Activated CD4-positive, alpha-beta T cell treated with anti-CD3 and anti-CD28 coated beads for 36 hours (primary cell): ENCODE measurements at regions of chr1 and their contacts with region 1.

Region 1: DNA sequence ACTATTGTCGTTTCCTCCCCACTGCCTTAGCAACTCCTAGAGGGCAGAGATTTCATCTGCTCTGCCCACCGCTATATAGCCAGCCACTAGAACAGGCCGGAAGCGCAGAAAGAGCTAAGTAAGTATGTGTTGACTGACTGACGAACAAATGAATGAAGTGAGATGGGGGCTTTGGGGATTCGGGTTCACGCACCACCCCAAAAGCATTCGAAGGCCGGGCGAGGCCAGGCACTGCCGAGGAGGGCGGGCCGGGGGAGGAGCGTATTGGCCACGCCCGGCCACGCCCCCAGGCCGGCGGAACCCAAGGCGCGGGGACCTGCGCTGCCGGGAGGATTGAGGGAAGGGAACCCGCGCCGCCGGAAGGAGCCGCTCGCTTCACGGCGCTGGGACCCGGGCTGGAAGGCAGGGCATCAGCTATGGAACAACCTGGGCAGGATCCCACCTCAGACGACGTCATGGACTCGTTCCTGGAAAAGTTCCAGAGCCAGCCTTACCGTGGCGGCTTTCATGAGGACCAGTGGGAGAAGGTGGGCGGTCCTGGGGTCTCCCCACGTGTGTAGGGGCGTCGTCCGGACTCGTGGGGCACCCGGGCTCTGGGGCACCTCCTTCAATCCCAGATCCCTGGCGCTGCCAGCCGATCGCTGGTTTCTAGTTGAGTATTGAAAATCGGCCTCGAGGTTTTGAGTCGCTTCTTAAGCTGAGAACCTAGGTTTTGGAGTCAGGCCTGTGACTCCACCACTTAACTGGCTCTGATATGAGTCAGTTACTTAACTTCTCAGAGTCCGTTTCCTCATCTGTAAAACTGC is at the start of gene TTC4:
- DNase-seq: peak; percentile 91
- ATAC-seq: peak; percentile 92
- H3K4me3 Mint-ChIP-seq: peak within 1 kb of the TSS; percentile 85
- H3K27ac Mint-ChIP-seq: peak within 1 kb of the TSS; percentile 92
- H3K4me1 Mint-ChIP-seq: peaks cover 29% of the 10 kb centered on the region
- H3K27me3 Mint-ChIP-seq: no peaks in the 10 kb centered on the region
- total RNA-seq, gene TTC4: 34.4 to 36.1 TPM

Region 2: DNA sequence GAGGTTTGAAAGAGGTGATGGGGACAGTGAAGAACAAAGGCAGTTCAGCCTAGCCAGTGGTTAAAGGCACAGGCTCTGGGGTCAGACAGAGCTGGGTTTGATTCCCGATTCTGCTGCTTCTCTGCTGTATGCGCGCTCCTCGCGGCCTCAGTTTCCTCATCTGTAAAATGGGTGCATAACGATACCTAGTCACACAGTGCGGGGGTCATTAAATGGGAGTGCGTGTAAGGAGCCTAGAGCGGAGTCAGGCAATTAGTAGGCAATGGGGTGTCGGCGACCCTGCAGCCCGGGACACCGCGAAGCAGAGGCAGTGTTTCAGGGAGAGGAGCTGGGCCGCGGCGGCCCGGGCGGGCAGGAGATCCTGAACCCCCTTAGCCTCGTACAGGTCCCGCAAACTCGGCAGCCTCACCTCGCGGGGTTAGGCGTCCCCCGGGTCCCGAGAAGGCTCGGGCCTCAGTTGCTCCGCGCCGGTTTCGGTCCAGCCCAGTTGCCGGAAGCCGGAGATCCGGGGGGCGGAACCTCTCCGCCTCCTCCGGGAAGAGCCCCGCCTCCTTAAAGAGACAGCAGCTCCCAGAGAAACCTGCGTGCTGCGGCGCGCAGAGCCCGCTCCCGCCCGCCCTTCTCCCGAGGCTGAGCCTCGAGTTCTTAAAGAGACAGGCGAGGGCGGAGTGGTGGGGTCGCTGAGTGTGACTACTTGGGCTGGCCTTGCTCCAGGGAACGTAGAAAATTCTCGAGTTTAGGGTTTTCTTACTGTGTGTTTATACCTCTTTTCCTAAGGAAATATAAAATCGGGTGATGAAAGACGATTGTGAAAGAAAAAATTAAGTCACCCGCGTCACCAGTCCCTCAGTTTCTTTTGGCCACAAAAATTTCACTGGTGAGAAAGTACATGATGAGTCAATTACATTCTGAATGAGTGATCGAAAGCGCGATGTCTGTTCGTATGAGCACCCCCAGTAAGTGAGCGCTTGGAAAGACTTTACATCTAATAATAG is 826.1 kb before region 1 on chr1 and contains the start of gene YIPF1:
- CTCF ChIA-PET with region 1: no interaction called
- POLR2A ChIA-PET with region 1: no interaction called
- intact Hi-C with region 1: loop called in 1 of 2 experiments (anchors 2 kb)
- DNase-seq: peak; percentile 93
- ATAC-seq: peak; percentile 90
- H3K4me3 Mint-ChIP-seq: peak within 1 kb of the TSS; percentile 96
- H3K27ac Mint-ChIP-seq: peak within 1 kb of the TSS; percentile 94
- H3K4me1 Mint-ChIP-seq: peaks cover 38% of the 10 kb centered on the region
- H3K27me3 Mint-ChIP-seq: no peaks in the 10 kb centered on the region
- total RNA-seq, gene YIPF1: 19.0 to 24.4 TPM

Region 3: DNA sequence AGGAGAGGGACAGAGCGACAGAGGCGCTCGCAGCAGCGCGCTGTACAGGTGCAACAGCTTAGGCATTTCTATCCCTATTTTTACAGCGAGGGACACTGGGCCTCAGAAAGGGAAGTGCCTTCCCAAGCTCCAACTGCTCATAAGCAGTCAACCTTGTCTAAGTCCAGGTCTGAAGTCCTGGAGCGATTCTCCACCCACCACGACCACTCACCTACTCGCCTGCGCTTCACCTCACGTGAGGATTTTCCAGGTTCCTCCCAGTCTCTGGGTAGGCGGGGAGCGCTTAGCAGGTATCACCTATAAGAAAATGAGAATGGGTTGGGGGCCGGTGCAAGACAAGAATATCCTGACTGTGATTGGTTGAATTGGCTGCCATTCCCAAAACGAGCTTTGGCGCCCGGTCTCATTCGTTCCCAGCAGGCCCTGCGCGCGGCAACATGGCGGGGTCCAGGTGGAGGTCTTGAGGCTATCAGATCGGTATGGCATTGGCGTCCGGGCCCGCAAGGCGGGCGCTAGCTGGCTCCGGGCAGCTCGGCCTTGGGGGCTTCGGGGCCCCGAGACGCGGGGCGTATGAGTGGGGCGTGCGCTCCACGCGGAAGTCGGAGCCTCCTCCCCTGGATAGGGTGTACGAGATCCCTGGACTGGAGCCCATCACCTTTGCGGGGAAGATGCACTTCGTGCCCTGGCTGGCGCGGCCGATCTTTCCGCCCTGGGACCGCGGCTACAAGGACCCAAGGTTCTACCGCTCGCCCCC is 515.8 kb before region 1 on chr1 and contains the starts of genes CYB5RL and MRPL37:
- CTCF ChIA-PET with region 1: no interaction called
- POLR2A ChIA-PET with region 1: no interaction called
- intact Hi-C with region 1: loop called in 1 of 2 experiments (anchors 1 kb)
- DNase-seq: peak; percentile 94
- ATAC-seq: peak; percentile 99
- H3K4me3 Mint-ChIP-seq: peak within 1 kb of the TSS; percentile 83
- H3K27ac Mint-ChIP-seq: peak within 1 kb of the TSS; percentile 84
- H3K4me1 Mint-ChIP-seq: peaks cover 30% of the 10 kb centered on the region
- H3K27me3 Mint-ChIP-seq: no peaks in the 10 kb centered on the region
- total RNA-seq, gene CYB5RL: 13.1 to 13.5 TPM
- total RNA-seq, gene MRPL37: 177 to 189 TPM

Region 4: DNA sequence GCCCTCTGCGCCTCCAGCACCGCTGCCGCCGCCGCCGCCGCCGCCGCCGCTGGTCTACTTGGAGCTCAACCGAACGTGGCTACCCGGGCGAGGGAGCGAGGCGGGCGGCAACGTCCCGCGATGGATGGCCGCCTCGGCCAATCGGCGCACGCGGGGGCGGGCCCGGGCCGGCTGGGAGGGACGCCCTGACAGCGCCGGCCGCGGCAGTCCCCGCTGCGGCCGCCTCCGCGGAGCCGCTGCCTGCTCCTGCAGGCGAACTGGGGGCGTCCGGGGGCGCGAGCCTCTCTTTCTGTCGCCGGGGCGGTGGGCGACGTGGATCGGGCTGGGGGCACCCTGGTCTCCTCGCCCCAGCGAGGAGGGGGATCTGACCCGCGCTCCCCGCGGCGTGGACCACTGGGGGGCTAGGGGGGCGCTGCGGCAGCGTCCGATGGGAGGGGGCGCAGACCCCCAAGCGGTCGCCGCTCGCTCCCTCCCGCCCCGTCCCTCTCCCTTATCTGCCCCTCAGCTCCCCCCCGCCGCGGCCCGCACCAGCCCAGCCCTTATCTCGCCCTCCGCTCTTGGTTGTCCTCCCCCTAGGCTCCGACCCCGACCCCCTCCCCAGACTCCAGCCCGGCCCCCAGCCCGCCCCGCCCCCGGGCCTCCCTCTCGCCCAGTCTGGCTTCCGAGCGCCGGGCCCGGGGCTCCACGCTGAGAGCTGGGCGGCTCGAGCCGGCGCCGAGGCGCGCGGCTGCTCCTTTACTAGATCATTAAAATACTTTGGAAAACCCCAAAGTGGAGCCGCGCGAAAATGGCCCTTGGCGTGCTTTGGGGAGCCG is 309.1 kb before region 1 on chr1 and contains the start of gene SSBP3:
- CTCF ChIA-PET with region 1: no interaction called
- POLR2A ChIA-PET with region 1: no interaction called
- intact Hi-C with region 1: loop called in 1 of 2 experiments (anchors 2 kb)
- DNase-seq: peak; percentile 95
- ATAC-seq: peak; percentile 84
- H3K4me3 Mint-ChIP-seq: peak within 1 kb of the TSS; percentile 76
- H3K27ac Mint-ChIP-seq: peak within 1 kb of the TSS; percentile 88
- H3K4me1 Mint-ChIP-seq: peaks cover 57% of the 10 kb centered on the region
- H3K27me3 Mint-ChIP-seq: no peaks in the 10 kb centered on the region
- total RNA-seq, gene SSBP3: 40.3 to 64.2 TPM

Region 5: DNA sequence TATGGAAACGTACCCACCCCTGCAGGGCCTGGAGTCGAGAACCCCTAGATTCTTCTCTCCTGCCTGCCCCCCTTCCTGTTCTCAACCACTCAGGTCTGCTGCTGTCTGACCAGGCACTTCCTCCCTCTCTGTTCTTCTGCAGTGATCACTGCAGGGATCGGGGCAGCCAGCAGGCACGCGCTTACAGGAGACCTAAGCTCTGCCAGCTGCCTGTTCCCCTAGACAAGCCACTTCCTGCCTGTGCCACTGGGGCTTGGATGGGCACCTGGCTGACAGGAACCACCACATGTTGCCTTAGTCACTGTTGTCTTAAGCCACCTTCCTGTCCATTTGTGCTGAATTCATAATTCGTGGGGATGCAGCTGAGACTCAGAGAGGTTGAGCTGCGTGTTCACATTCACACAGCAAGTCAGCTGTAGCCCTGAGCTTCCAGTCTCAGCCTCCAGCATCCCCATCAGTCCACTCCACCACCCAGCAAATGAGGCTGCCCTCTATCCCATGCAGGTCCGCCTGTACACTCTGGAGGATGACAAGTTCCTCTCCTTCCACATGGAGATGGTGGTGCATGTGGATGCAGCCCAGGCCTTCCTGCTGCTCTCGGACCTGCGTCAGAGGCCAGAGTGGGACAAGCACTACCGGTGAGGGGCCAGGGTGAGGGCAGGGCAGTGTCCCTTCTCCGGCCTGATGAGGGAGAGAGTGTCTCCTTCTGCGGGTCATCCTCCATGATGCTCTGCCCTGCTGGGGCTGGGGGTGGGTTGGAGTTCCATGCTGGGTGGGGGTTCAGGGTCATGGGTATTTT is 110.9 kb before region 1 on chr1:
- CTCF ChIA-PET with region 1: no interaction called
- POLR2A ChIA-PET with region 1: no interaction called
- intact Hi-C with region 1: no loop called
- DNase-seq: peak; percentile 51
- ATAC-seq: peak; percentile 86
- H3K4me3 Mint-ChIP-seq: no peak overlapping the region
- H3K27ac Mint-ChIP-seq: no peak overlapping the region
- H3K4me1 Mint-ChIP-seq: peaks cover 14% of the 10 kb centered on the region
- H3K27me3 Mint-ChIP-seq: no peaks in the 10 kb centered on the region

Region 6: GRCh38 chr1:54671985-54672608 is 43.6 kb before region 1 on chr1:
- CTCF ChIA-PET with region 1: interaction called, 3 read pairs
- POLR2A ChIA-PET with region 1: no interaction called
- intact Hi-C with region 1: loop called (anchors 2 kb)
- DNase-seq: peak; percentile 84
- ATAC-seq: peak; percentile 96
- H3K4me3 Mint-ChIP-seq: no peak overlapping the region
- H3K27ac Mint-ChIP-seq: no peak overlapping the region
- H3K4me1 Mint-ChIP-seq: no peaks in the 10 kb centered on the region
- H3K27me3 Mint-ChIP-seq: no peaks in the 10 kb centered on the region

Region 7: DNA sequence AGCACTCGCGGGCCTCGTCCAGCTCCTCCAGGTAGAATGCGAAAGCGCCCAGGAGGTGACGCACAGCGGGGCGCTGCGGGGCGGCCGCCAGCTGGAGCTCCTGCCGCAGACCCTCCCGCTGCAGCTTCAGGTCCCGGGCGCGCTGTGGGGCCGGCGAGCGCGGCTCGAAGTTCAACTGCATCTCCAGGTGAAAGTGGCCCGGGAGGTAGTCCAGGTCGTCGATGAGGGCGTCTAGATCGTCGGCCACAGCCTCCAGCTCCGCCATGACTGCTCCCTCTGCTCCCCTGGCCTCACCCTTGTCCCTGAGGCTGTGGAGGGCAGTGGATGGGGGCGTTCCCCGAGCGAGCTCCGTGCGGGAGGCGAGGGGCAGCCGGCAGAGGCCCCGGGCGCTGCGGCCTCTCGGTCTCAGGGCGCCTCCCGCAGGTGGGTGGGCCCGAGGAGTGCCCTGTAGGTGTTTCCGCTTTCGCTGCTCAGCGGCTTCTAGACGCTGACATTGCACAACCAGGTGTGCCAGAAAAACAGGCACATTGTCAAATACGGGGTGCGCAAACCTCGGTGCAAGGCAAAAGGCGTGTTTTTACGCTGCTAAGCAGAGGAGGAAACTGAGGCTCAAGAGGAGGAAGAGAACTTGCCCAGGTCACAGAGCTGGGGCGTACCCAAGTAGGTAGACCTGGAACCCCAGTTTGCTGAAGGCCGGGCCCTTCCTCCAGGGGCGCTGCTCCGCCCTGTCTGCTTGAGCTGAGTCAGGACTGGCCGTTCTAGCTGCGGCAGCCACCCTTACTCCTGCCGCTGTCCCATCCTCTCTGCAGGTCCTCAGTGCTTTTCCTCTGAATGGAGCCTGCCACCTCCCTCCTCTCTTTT is 85.4 kb after region 1 on chr1 and contains the start of gene TTC22:
- CTCF ChIA-PET with region 1: interaction called, 5 read pairs
- POLR2A ChIA-PET with region 1: interaction called, 4 read pairs
- intact Hi-C with region 1: loop called (anchors 1 to 2 kb)
- DNase-seq: peak; percentile 87
- ATAC-seq: peak; percentile 60
- H3K4me3 Mint-ChIP-seq: peak within 1 kb of the TSS; percentile 77
- H3K27ac Mint-ChIP-seq: peak within 1 kb of the TSS; percentile 86
- H3K4me1 Mint-ChIP-seq: peaks cover 55% of the 10 kb centered on the region
- H3K27me3 Mint-ChIP-seq: no peaks in the 10 kb centered on the region
- total RNA-seq, gene TTC22: 4.1 to 4.2 TPM

Region 8: GRCh38 chr1:54850737-54851136 is 135.0 kb after region 1 on chr1:
- CTCF ChIA-PET with region 1: no interaction called
- POLR2A ChIA-PET with region 1: no interaction called
- intact Hi-C with region 1: no loop called
- DNase-seq: no peak
- ATAC-seq: no peak
- H3K4me3 Mint-ChIP-seq: no peak overlapping the region
- H3K27ac Mint-ChIP-seq: no peak overlapping the region
- H3K4me1 Mint-ChIP-seq: no peaks in the 10 kb centered on the region
- H3K27me3 Mint-ChIP-seq: no peaks in the 10 kb centered on the region

Region 9: DNA sequence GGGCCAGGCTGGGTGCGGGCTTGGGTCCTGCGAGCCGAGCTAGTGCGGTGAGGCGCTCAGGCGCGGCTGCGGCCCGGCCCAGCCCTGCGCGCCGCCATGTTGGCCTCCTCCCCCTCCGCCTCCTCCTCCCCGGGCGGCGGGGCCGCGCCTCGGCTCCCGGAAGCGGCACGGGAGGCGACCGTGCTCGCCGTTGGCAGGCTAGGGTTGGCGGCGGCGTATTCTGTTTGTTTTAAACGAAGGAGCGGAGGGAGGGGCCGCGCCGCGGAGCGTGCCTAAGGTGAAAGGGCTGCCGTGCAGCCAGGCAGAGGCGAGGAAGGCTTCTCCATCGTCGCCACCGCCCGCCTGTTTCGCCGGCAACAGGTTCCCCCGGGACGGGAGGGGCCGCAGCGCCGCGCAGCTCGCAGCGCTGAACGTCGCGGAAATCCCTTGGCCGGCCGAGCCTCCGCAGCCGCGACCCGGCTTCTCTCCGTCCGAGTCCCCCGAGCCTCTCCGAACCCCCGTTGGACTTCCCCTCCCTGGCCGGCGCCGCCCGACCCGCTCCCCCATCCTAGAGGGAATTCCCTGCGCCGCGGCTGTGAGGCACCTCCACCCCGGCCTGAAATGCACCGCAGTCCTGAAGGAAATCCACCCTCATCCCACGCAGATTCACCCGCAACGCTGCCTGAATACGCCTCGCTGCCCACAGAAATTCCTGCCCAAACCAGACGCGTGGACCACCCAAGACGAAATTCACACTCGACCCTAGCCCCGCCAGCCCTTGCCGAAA is 499.7 kb after region 1 on chr1 and contains the start of gene USP24:
- CTCF ChIA-PET with region 1: no interaction called
- POLR2A ChIA-PET with region 1: no interaction called
- intact Hi-C with region 1: loop called in 1 of 2 experiments (anchors 10 kb)
- DNase-seq: peak; percentile 90
- ATAC-seq: peak; percentile 84
- H3K4me3 Mint-ChIP-seq: peak within 1 kb of the TSS; percentile 97
- H3K27ac Mint-ChIP-seq: peak within 1 kb of the TSS; percentile 100
- H3K4me1 Mint-ChIP-seq: peaks cover 55% of the 10 kb centered on the region
- H3K27me3 Mint-ChIP-seq: no peaks in the 10 kb centered on the region
- total RNA-seq, gene USP24: 37.0 to 39.7 TPM